Esophagus squamous epithelium (tissue), 5 donors: ENCODE measurements at regions of chr4 and their contacts with region 1.

Region 1: GRCh38 chr4:77473509-77473908 is 132.1 kb upstream of the CXCL13 start:
- DNase-seq: no peak
- H3K4me3 ChIP-seq: no peak overlapping the region
- H3K27ac ChIP-seq: no peak overlapping the region
- H3K4me1 ChIP-seq: peaks cover 0 to 29% (median 7%) of the 10 kb centered on the region in 3 donors
- H3K27me3 ChIP-seq: no peaks in the 10 kb centered on the region
- CTCF ChIP-seq: peak in 5 of 6 experiments; percentile 10 to 50 (median 28)
- POLR2A ChIP-seq: no peak

Region 2: DNA sequence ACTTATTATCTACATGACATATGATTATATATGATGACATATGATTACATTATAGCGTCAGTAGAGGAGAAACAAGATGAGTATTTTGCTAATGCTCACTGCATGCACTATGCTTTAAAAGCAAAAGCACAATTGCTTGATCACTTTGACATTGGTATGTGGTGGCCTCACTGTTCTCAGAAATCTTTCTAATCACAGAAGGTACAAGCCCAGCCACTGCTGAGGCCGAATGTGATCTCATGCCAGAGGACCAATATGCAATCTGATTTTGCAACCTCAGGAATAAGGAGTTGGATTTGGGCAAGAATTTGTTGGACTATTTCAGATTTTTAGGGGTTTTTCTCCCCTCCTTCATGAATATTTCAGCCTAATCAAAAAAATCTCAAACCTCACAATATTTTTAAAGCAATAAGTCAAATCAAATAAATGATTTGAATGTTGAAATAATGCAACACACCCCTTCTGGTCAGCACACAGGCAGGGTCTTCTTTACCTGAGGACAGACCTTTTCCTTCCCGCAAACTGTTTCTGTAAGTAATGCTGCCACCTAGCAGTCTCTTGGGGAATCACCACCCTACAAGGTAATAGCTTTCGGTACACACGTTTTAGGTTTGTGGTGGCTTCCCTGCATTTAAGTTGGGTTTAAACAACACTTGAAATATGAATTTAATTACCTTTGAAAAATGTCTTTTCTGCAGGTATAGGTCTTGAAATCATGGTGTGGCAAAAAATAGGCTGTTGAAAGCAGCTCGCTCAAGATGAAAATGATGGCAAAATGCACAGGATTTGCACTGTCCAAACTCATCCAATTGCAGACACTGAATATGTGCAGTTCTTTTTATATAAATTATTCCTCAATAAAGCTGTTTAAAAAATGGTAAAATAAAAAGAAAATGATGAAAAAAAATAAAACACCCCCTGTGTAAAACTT is 127.3 kb after region 1 on chr4:
- intact Hi-C with region 1: loop called (anchors 5 kb)
- DNase-seq: no peak
- H3K4me3 ChIP-seq: no peak overlapping the region
- H3K27ac ChIP-seq: no peak overlapping the region
- H3K4me1 ChIP-seq: peaks cover 0 to 9% (median 0%) of the 10 kb centered on the region in 3 donors
- H3K27me3 ChIP-seq: peaks cover 0 to 21% (median 0%) of the 10 kb centered on the region in 4 donors
- CTCF ChIP-seq: peak; percentile 23 to 76 (median 72)
- POLR2A ChIP-seq: no peak